ENCODE measurements at regions of chr3 and their contacts with region 1.

Region 1: GRCh38 chr3:128845778-128846485 is 33.5 kb upstream of the ACAD9 start:
- DNase-seq: peak; percentile 71 to 82 (median 73)
- H3K4me3 ChIP-seq: peak overlapping the region in 1 of 2 donors; percentile 52
- H3K4me3 Mint-ChIP-seq: peak overlapping the region; percentile 75 to 95 (median 88)
- H3K27ac ChIP-seq: peak overlapping the region; percentile 29
- H3K27ac Mint-ChIP-seq: peak overlapping the region; percentile 45 to 97 (median 84)
- H3K4me1 ChIP-seq: peaks cover 18% of the 10 kb centered on the region
- H3K4me1 Mint-ChIP-seq: peaks cover 8 to 14% (median 11%) of the 10 kb centered on the region in 4 donors
- H3K27me3 ChIP-seq: no peaks in the 10 kb centered on the region
- H3K27me3 Mint-ChIP-seq: no peaks in the 10 kb centered on the region

Region 2: DNA sequence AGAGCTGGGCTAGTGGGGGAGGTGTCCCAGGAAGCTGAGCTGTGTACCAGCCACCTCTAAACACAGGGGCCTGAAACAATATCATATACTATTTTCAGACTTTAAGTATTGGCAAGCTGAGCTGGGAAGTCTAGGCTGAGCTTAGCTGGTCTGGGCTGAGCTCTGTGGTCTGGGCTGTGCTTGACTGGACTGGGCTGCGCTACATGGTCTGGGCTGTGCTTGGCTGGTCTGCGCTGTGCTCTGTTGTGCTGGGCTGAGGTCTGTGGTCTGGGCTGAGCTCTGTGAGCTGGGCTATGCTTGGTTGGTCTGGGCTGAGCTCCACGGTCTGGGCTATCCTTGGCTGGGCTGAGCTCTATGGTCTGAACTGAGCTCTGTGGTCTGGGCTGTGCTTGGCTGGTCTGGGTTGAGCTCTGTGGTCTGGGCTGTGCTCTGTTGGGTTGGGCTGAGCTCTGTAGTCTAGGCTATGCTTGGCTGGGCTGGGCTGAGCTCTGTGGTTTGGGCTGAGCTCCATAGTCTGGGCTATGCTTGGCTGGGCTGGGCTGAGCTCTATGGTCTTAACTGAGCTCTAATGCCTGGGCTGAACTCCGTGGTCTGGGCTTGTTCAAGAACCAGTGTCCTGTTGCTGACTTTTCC is 1771.1 kb before region 1 on chr3:
- CTCF ChIA-PET with region 1: no interaction called
- POLR2A ChIA-PET with region 1: no interaction called
- intact Hi-C with region 1: no loop called
- DNase-seq: no peak
- H3K4me3 ChIP-seq: no peak overlapping the region
- H3K4me3 Mint-ChIP-seq: no peak overlapping the region
- H3K27ac ChIP-seq: no peak overlapping the region
- H3K27ac Mint-ChIP-seq: no peak overlapping the region
- H3K4me1 ChIP-seq: no peaks in the 10 kb centered on the region
- H3K4me1 Mint-ChIP-seq: no peaks in the 10 kb centered on the region
- H3K27me3 ChIP-seq: no peaks in the 10 kb centered on the region
- H3K27me3 Mint-ChIP-seq: peaks cover 0 to 1% of the 10 kb centered on the region in 2 donors

Region 3: DNA sequence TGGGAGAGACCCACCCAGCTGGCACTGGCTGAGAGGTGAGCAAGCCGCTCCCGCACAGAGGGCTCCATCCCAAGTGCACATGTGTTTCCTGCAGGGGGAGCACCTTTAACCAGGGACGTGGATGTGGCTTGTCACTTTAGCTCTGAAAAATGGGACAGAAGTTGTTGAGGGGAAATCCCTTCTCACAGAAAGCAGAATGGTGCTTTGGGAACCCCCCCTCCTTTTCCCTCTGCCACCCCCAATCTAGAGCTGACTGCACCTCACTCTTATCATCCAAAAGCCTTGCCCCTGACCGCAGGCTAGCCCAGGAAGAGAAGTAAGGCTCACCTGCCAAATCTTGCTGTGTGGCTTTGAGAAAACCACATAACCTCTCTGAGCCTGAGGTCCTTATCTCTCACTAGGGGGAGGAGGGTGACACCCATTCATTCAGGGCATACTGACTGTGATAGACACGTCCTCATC is 273.3 kb before region 1 on chr3:
- CTCF ChIA-PET with region 1: no interaction called
- POLR2A ChIA-PET with region 1: no interaction called
- intact Hi-C with region 1: no loop called
- DNase-seq: peak; percentile 10 to 64 (median 16)
- H3K4me3 ChIP-seq: no peak overlapping the region
- H3K4me3 Mint-ChIP-seq: peak overlapping the region in 4 of 8 donors; percentile 16 to 50 (median 36)
- H3K27ac ChIP-seq: no peak overlapping the region
- H3K27ac Mint-ChIP-seq: peak overlapping the region in 2 of 7 donors; percentile 15 to 24
- H3K4me1 ChIP-seq: peaks cover 18% of the 10 kb centered on the region
- H3K4me1 Mint-ChIP-seq: peaks cover 11 to 17% (median 14%) of the 10 kb centered on the region in 4 donors
- H3K27me3 ChIP-seq: no peaks in the 10 kb centered on the region
- H3K27me3 Mint-ChIP-seq: peaks cover 5 to 13% of the 10 kb centered on the region in 2 donors

Region 4: GRCh38 chr3:128780101-128780837 is 65.7 kb before region 1 on chr3:
- CTCF ChIA-PET with region 1: interaction called, 20 read pairs
- POLR2A ChIA-PET with region 1: no interaction called
- intact Hi-C with region 1: loop called (anchors 1 kb)
- DNase-seq: no peak
- H3K4me3 ChIP-seq: no peak overlapping the region
- H3K4me3 Mint-ChIP-seq: no peak overlapping the region
- H3K27ac ChIP-seq: no peak overlapping the region
- H3K27ac Mint-ChIP-seq: peak overlapping the region in 6 of 7 donors; percentile 6 to 88 (median 63)
- H3K4me1 ChIP-seq: peaks cover 62% of the 10 kb centered on the region
- H3K4me1 Mint-ChIP-seq: peaks cover 54 to 90% (median 73%) of the 10 kb centered on the region in 4 donors
- H3K27me3 ChIP-seq: no peaks in the 10 kb centered on the region
- H3K27me3 Mint-ChIP-seq: no peaks in the 10 kb centered on the region

Region 5: DNA sequence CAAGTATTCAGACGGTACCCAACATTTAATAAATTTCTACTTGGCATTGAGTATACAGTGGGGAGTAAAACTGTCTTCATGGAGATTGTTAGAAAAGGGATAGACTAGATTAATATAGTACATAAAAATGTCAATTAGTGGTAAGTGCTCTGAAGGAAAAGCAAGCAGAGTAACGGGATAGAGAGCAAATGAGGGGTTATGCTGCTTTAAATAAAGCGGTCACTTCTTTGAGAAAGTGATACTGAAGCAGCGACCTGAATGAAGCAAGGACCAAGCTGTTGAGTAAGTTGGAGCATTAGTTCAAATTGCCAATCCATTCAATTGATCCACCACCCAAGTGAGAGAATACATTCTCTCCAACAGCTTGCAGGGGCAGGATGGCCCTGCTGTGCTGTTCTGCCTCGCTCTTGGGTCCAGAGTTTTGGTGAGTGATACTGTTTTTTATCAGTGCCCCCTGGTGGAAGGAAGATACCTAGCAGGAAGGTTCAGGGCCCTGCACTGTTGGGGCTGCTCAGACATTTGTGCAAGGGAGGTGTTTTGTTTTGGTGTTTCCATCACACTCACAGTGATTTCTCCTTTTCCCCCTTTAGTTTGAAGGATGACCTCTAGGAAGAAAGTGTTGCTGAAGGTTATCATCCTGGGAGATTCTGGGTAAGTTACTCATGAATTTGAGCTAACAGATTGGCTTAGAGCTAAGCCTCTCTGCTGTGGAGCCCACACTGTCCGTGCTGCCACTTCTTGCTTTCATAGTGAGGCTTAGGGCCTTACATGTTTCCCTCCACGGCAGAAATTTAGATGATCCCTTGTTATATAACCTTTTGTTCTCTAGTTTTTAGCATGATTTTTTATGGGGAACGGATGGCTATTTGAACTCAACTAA is 50.9 kb before region 1 on chr3:
- CTCF ChIA-PET with region 1: interaction called, 29 read pairs
- POLR2A ChIA-PET with region 1: no interaction called
- intact Hi-C with region 1: loop called (anchors 5 kb)
- DNase-seq: peak; percentile 71 to 75 (median 74)
- H3K4me3 ChIP-seq: no peak overlapping the region
- H3K4me3 Mint-ChIP-seq: peak overlapping the region in 4 of 8 donors; percentile 7 to 47 (median 22)
- H3K27ac ChIP-seq: peak overlapping the region; percentile 18
- H3K27ac Mint-ChIP-seq: peak overlapping the region; percentile 73 to 91 (median 88)
- H3K4me1 ChIP-seq: peaks cover 58% of the 10 kb centered on the region
- H3K4me1 Mint-ChIP-seq: peaks cover 37 to 68% (median 55%) of the 10 kb centered on the region in 4 donors
- H3K27me3 ChIP-seq: no peaks in the 10 kb centered on the region
- H3K27me3 Mint-ChIP-seq: no peaks in the 10 kb centered on the region

Region 6: GRCh38 chr3:128813097-128813496 is 32.8 kb before region 1 on chr3:
- CTCF ChIA-PET with region 1: interaction called, 10 read pairs
- POLR2A ChIA-PET with region 1: no interaction called
- intact Hi-C with region 1: no loop called
- DNase-seq: no peak
- H3K4me3 ChIP-seq: no peak overlapping the region
- H3K4me3 Mint-ChIP-seq: no peak overlapping the region
- H3K27ac ChIP-seq: no peak overlapping the region
- H3K27ac Mint-ChIP-seq: peak overlapping the region in 3 of 7 donors; percentile 0 to 62 (median 10)
- H3K4me1 ChIP-seq: no peaks in the 10 kb centered on the region
- H3K4me1 Mint-ChIP-seq: peaks cover 0 to 4% (median 1%) of the 10 kb centered on the region in 4 donors
- H3K27me3 ChIP-seq: no peaks in the 10 kb centered on the region
- H3K27me3 Mint-ChIP-seq: no peaks in the 10 kb centered on the region

Region 7: DNA sequence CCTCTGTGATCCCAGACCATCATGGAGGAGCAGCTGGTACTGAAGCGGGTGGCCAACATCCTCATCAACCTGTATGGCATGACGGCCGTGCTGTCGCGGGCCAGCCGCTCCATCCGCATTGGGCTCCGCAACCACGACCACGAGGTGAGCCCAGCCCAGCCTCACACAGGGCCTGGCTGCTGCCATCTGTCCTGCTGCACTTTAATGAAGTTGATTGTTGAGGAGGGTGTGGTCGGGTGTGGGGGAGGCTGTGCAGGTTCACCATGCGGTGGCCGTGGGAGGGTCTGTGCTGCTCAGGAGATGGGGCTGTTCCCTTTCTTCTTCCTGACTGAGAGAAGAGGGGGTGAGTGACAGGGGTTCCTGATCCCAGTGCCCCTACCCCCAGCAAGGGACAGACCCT is 64.1 kb after region 1 on chr3:
- CTCF ChIA-PET with region 1: no interaction called
- POLR2A ChIA-PET with region 1: no interaction called
- intact Hi-C with region 1: no loop called
- DNase-seq: no peak
- H3K4me3 ChIP-seq: no peak overlapping the region
- H3K4me3 Mint-ChIP-seq: no peak overlapping the region
- H3K27ac ChIP-seq: no peak overlapping the region
- H3K27ac Mint-ChIP-seq: no peak overlapping the region
- H3K4me1 ChIP-seq: no peaks in the 10 kb centered on the region
- H3K4me1 Mint-ChIP-seq: no peaks in the 10 kb centered on the region
- H3K27me3 ChIP-seq: no peaks in the 10 kb centered on the region
- H3K27me3 Mint-ChIP-seq: no peaks in the 10 kb centered on the region

Region 8: DNA sequence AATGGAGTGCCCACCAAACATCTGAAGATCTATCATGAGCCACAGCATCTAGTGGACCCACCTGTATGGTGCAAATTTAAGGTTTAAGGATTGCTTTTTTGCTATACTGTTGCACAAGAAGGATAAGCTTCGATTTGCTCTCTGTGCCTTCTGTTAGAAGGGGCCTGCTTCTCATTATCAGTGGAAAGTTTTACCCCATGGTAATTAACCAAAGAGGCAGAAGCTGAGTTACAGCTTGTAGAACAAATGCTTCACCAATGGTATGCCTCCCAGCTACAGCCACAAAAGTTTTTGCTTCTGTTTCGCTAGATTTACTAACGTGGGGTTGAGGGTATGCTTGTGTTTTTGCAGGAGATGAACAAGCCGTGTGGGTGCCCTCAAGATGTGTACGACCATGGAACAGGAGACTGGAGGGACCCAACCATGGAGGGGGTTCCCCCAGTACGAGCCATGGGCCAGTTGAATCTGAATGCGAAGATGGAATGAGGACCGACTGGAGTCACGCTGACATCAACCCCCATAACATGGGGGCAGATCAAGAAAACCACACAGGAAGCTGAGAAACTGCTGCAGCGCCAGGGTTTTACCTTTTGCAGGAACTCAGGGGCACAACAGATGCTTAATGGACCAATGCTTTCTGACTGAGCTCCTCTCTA is 77.0 kb after region 1 on chr3:
- CTCF ChIA-PET with region 1: interaction called, 10 read pairs
- POLR2A ChIA-PET with region 1: no interaction called
- intact Hi-C with region 1: loop called (anchors 1 kb)
- DNase-seq: peak; percentile 55 to 64 (median 57)
- H3K4me3 ChIP-seq: peak overlapping the region; percentile 29 to 74
- H3K4me3 Mint-ChIP-seq: peak overlapping the region; percentile 82 to 90 (median 85)
- H3K27ac ChIP-seq: no peak overlapping the region
- H3K27ac Mint-ChIP-seq: peak overlapping the region; percentile 70 to 91 (median 88)
- H3K4me1 ChIP-seq: peaks cover 20% of the 10 kb centered on the region
- H3K4me1 Mint-ChIP-seq: peaks cover 26 to 45% (median 37%) of the 10 kb centered on the region in 4 donors
- H3K27me3 ChIP-seq: no peaks in the 10 kb centered on the region
- H3K27me3 Mint-ChIP-seq: no peaks in the 10 kb centered on the region

Measured in CD4-positive, alpha-beta memory T cell (primary cell).